ENCODE measurements at regions of chr16 and their contacts with region 1.

Region 1: GRCh38 chr16:82639666-82640336 is 13.0 kb downstream of the CDH13 start:
- DNase-seq: peak in 1 of 2 experiments; percentile 83
- H3K4me3 ChIP-seq: no peak overlapping the region
- H3K27ac ChIP-seq: no peak overlapping the region
- H3K4me1 ChIP-seq: peaks cover 2 to 5% (median 4%) of the 10 kb centered on the region in 4 experiments; a peak in 5 of 7 replicates
- H3K27me3 ChIP-seq: no peaks in the 10 kb centered on the region
- CTCF ChIP-seq: peak; percentile 81 to 98 (median 91)
- EP300 ChIP-seq: no peak
- POLR2A ChIP-seq: no peak
- RAD21 ChIP-seq: peak; percentile 75 to 80

Region 2: GRCh38 chr16:82603784-82604411 is 35.9 kb before region 1 on chr16:
- CTCF ChIA-PET with region 1: interaction called, 15 read pairs
- POLR2A ChIA-PET with region 1: no interaction called
- DNase-seq: no peak
- H3K4me3 ChIP-seq: no peak overlapping the region
- H3K27ac ChIP-seq: no peak overlapping the region
- H3K4me1 ChIP-seq: peaks cover 8 to 14% (median 10%) of the 10 kb centered on the region in 4 experiments
- H3K27me3 ChIP-seq: no peaks in the 10 kb centered on the region; a peak in 1 of 7 replicates
- CTCF ChIP-seq: peak; percentile 66 to 82 (median 71)
- EP300 ChIP-seq: no peak
- POLR2A ChIP-seq: no peak
- RAD21 ChIP-seq: peak; percentile 60 to 73

Region 3: GRCh38 chr16:82626791-82627261 is 13.0 kb before region 1 on chr16 and contains the start of gene CDH13:
- CTCF ChIA-PET with region 1: interaction called, 36 read pairs
- POLR2A ChIA-PET with region 1: interaction called, 3 read pairs
- DNase-seq: peak in 1 of 2 experiments; percentile 60
- H3K4me3 ChIP-seq: peak within 1 kb of the TSS; percentile 55 to 74 (median 62)
- H3K27ac ChIP-seq: no peak within 1 kb of the TSS
- H3K4me1 ChIP-seq: peaks cover 2 to 11% (median 7%) of the 10 kb centered on the region in 4 experiments
- H3K27me3 ChIP-seq: peaks cover 16 to 46% (median 40%) of the 10 kb centered on the region in 4 experiments
- CTCF ChIP-seq: no peak
- EP300 ChIP-seq: no peak
- POLR2A ChIP-seq: no peak
- RAD21 ChIP-seq: no peak
- total RNA-seq, gene CDH13: 2.3 and 2.6 TPM in 2 replicates

Region 4: GRCh38 chr16:82671741-82672140 is 31.9 kb after region 1 on chr16:
- CTCF ChIA-PET with region 1: interaction called, 13 read pairs
- POLR2A ChIA-PET with region 1: no interaction called
- DNase-seq: peak in 1 of 2 experiments; percentile 50
- H3K4me3 ChIP-seq: no peak overlapping the region
- H3K27ac ChIP-seq: no peak overlapping the region
- H3K4me1 ChIP-seq: peaks cover 0 to 2% (median 0%) of the 10 kb centered on the region in 4 experiments; a peak in 1 of 7 replicates
- H3K27me3 ChIP-seq: no peaks in the 10 kb centered on the region
- CTCF ChIP-seq: peak; percentile 14 to 46 (median 25); a peak in 3 of 4 replicates
- EP300 ChIP-seq: no peak
- POLR2A ChIP-seq: no peak
- RAD21 ChIP-seq: peak in 1 of 2 experiments; percentile 31; a peak in 1 of 4 replicates

Region 5: GRCh38 chr16:82857693-82858365 is 218.0 kb after region 1 on chr16:
- CTCF ChIA-PET with region 1: no interaction called
- POLR2A ChIA-PET with region 1: no interaction called
- DNase-seq: no peak
- H3K4me3 ChIP-seq: no peak overlapping the region
- H3K27ac ChIP-seq: no peak overlapping the region
- H3K4me1 ChIP-seq: no peaks in the 10 kb centered on the region
- H3K27me3 ChIP-seq: no peaks in the 10 kb centered on the region
- CTCF ChIP-seq: no peak
- EP300 ChIP-seq: no peak
- POLR2A ChIP-seq: no peak
- RAD21 ChIP-seq: no peak

Region 6: DNA sequence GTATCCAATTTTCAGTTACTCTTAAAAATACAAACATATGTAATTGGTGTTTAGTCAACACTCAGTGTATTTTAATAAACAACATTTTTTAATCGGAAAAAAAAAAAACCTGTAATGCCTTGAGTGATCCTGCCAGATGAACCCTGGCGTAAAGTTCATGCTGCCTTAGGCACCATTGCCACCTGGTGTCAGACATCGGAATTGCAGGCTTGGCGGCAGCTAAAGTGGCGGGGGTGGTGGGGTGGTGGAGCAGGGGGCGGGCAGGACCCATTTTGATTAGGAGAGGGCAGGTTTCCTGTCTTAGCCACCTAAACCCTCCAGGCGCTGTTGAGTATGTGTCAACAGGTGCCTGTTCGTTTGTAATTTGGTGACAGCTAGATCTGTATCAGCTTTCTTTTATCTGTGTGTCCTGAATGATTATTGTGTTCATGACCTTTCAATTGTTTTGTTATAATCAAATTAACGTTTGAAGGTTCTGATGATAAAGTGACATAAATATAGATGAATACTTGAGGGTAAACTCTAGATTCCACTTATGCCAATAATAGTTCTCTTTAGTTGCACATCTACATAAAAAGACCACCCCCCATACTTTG is 575.7 kb after region 1 on chr16:
- CTCF ChIA-PET with region 1: interaction called, 13 read pairs
- POLR2A ChIA-PET with region 1: no interaction called
- DNase-seq: peak; percentile 47 to 97
- H3K4me3 ChIP-seq: no peak overlapping the region
- H3K27ac ChIP-seq: no peak overlapping the region
- H3K4me1 ChIP-seq: peaks cover 0 to 8% (median 0%) of the 10 kb centered on the region in 4 experiments; a peak in 3 of 7 replicates
- H3K27me3 ChIP-seq: peaks cover 0 to 1% (median 0%) of the 10 kb centered on the region in 4 experiments; a peak in 1 of 7 replicates
- CTCF ChIP-seq: peak; percentile 84 to 94 (median 93)
- EP300 ChIP-seq: no peak
- POLR2A ChIP-seq: no peak
- RAD21 ChIP-seq: peak; percentile 93 to 97